ENCODE measurements at regions of chr15 and their contacts with region 1.

Region 1: GRCh38 chr15:87312221-87312620 is 944.3 kb downstream of the NTRK3 start:
- DNase-seq: no peak
- ATAC-seq: no peak
- H3K4me3 ChIP-seq: no peak overlapping the region
- H3K27ac ChIP-seq: no peak overlapping the region
- H3K4me1 ChIP-seq: no peaks in the 10 kb centered on the region
- H3K27me3 ChIP-seq: no peaks in the 10 kb centered on the region
- CTCF ChIP-seq: no peak
- EP300 ChIP-seq: no peak
- POLR2A ChIP-seq: no peak
- RAD21 ChIP-seq: no peak

Region 2: GRCh38 chr15:87374339-87374738 is 62.1 kb after region 1 on chr15:
- CTCF ChIA-PET with region 1: no interaction called
- POLR2A ChIA-PET with region 1: no interaction called
- RAD21 ChIA-PET with region 1: no interaction called
- SMC1A ChIA-PET with region 1: no interaction called
- in situ Hi-C with region 1: no loop called
- intact Hi-C with region 1: loop called (anchors 10 kb)
- DNase-seq: no peak
- ATAC-seq: no peak
- H3K4me3 ChIP-seq: no peak overlapping the region
- H3K27ac ChIP-seq: no peak overlapping the region
- H3K4me1 ChIP-seq: no peaks in the 10 kb centered on the region
- H3K27me3 ChIP-seq: no peaks in the 10 kb centered on the region
- CTCF ChIP-seq: no peak
- EP300 ChIP-seq: no peak
- POLR2A ChIP-seq: no peak
- RAD21 ChIP-seq: no peak

Measured in GM12878 (cell line).